K562 (cell line): ENCODE measurements at regions of chr10 and their contacts with region 1.

Region 1: DNA sequence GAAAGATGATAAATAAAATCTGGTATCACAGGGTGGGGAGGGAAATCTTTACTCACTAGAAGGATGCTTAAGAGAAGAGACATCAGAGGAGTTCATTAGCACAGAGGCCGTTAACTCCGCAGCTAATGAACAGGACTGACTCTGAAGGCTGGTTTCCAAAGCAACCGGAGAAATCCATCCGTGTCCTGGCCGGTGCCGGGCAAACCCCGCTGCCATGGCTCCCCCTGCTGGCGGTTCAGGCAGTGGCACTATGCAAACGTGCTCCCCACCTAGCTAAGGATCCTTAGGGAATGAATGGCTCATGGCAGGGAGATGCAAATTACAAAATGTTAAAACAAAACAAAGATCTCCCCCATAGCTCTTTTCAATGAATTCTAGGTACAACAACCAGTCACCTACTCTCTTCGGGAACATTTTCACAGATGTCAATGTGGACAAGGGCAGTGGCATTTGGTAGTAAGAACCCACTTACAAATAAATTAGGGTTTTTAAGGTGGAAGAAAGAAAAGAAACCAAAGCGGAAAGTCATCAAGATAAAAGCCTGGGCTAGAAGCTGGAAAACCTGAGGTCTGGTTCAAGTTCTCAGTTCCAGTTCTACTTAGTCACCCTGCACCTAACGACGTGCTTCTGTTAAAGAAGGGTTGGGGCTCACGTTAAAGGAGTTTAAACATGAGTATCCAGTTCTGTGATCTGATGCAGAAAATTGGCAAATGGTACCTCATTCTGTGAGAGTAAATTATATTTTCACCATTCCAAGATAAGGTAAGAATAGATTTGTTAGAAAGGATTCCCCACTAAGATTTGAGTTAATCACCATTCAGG is 138.2 kb downstream of the SVIL start:
- DNase-seq: peak; percentile 66 to 75 (median 72)
- ATAC-seq: peak; percentile 97
- H3K4me3 ChIP-seq: no peak overlapping the region
- H3K27ac ChIP-seq: no peak overlapping the region
- H3K4me1 ChIP-seq: no peaks in the 10 kb centered on the region
- H3K27me3 ChIP-seq: peaks cover 22 to 44% of the 10 kb centered on the region in 2 experiments
- CTCF ChIP-seq: peak; percentile 84 to 91 (median 87)
- EP300 ChIP-seq: no peak
- POLR2A ChIP-seq: no peak
- RAD21 ChIP-seq: peak; percentile 85 to 90

Region 2: DNA sequence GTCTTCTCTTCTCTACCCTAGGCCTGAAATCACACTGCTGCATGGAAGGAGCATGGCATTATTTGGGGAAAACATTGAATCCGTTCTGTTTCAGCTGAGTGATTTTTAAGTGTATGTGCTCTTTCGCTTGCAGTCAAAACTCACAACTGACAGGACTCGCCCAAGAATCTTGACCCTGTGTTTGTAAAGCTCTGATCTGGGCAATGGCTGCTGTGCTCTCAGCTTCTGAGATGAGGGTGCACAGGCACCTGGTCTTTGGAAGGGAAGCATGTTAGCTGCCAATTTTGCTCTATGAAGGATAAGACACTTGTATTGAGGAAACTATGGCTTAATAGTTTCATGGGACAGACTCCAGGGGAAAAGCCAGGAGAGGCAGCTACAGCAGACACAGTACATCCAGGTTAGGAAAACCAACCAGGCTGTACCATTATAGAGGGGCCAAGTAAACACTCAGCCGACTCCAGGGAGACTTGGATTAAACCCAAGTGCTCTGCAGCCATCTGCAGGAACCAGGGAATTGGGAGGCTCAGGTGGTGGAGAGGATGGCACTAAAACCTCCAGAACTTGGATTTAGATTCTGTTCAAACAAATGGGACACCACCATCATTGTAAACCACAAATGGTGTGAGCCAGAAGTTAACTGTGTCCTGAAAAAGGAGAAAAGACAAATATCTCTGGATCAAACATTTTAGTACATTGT is 164.3 kb before region 1 on chr10:
- CTCF ChIA-PET with region 1: no interaction called
- POLR2A ChIA-PET with region 1: no interaction called
- in situ Hi-C with region 1: no loop called
- intact Hi-C with region 1: no loop called
- DNase-seq: no peak
- ATAC-seq: no peak
- H3K4me3 ChIP-seq: no peak overlapping the region
- H3K27ac ChIP-seq: no peak overlapping the region
- H3K4me1 ChIP-seq: no peaks in the 10 kb centered on the region
- H3K27me3 ChIP-seq: peaks cover 4% of the 10 kb centered on the region in 2 experiments; a peak in 4 of 5 replicates
- CTCF ChIP-seq: no peak
- EP300 ChIP-seq: no peak
- POLR2A ChIP-seq: no peak
- RAD21 ChIP-seq: no peak

Region 3: GRCh38 chr10:29377333-29377961 is 119.1 kb before region 1 on chr10:
- CTCF ChIA-PET with region 1: interaction called, 9 read pairs
- POLR2A ChIA-PET with region 1: no interaction called
- in situ Hi-C with region 1: no loop called
- intact Hi-C with region 1: loop called (anchors 1 kb)
- DNase-seq: peak; percentile 28 to 55 (median 40)
- ATAC-seq: peak; percentile 76
- H3K4me3 ChIP-seq: no peak overlapping the region
- H3K27ac ChIP-seq: no peak overlapping the region
- H3K4me1 ChIP-seq: no peaks in the 10 kb centered on the region
- H3K27me3 ChIP-seq: peaks cover 12 to 25% of the 10 kb centered on the region in 2 experiments; a peak in 4 of 5 replicates
- CTCF ChIP-seq: peak; percentile 53 to 90 (median 61); a peak in 5 of 6 replicates
- EP300 ChIP-seq: no peak
- POLR2A ChIP-seq: no peak
- RAD21 ChIP-seq: peak; percentile 64 to 65

Region 4: GRCh38 chr10:29392376-29393021 is 104.1 kb before region 1 on chr10:
- CTCF ChIA-PET with region 1: no interaction called
- POLR2A ChIA-PET with region 1: no interaction called
- in situ Hi-C with region 1: no loop called
- intact Hi-C with region 1: no loop called
- DNase-seq: peak; percentile 52 to 59 (median 56)
- ATAC-seq: peak; percentile 84
- H3K4me3 ChIP-seq: no peak overlapping the region
- H3K27ac ChIP-seq: no peak overlapping the region
- H3K4me1 ChIP-seq: no peaks in the 10 kb centered on the region
- H3K27me3 ChIP-seq: peaks cover 20 to 43% of the 10 kb centered on the region in 2 experiments; a peak in 3 of 5 replicates
- CTCF ChIP-seq: peak; percentile 66 to 75 (median 73)
- EP300 ChIP-seq: no peak
- POLR2A ChIP-seq: no peak
- RAD21 ChIP-seq: peak; percentile 18 to 58; a peak in 3 of 4 replicates

Region 5: DNA sequence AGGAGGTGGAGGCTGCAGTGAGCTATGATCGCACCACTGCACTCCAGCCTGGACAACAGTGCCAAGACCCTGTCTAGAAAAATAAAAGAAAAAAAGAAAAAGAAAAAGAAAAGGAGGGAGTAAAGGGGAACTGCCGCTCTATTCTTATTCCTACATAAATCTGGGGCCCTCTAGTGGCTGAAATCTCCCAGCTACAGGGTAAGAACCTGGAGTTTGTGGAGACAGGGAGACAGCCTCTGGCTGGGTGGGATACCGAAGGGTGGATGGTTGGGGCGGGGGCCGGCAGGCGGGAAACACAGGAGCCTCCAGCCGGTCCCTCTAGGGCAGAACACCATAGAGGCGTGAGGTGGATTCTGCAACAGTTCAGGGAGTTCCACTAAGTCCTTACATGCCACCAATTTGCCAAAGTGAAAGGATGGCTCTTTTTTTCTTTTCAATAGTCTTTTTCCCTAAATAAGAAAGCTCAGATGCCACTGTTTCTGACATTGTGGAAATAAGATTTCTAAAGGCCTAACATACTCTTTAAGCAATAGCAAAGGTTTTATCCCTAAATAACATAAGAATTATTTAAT is 20.9 kb after region 1 on chr10:
- CTCF ChIA-PET with region 1: no interaction called
- POLR2A ChIA-PET with region 1: no interaction called
- in situ Hi-C with region 1: no loop called
- intact Hi-C with region 1: loop called (anchors 1 kb)
- DNase-seq: peak; percentile 38 to 52 (median 42)
- ATAC-seq: peak; percentile 93
- H3K4me3 ChIP-seq: no peak overlapping the region
- H3K27ac ChIP-seq: no peak overlapping the region
- H3K4me1 ChIP-seq: no peaks in the 10 kb centered on the region
- H3K27me3 ChIP-seq: peaks cover 8 to 27% of the 10 kb centered on the region in 2 experiments; a peak in 4 of 5 replicates
- CTCF ChIP-seq: peak; percentile 61 to 71 (median 64)
- EP300 ChIP-seq: no peak
- POLR2A ChIP-seq: no peak
- RAD21 ChIP-seq: peak in 1 of 2 experiments; percentile 28; a peak in 1 of 4 replicates

Region 6: DNA sequence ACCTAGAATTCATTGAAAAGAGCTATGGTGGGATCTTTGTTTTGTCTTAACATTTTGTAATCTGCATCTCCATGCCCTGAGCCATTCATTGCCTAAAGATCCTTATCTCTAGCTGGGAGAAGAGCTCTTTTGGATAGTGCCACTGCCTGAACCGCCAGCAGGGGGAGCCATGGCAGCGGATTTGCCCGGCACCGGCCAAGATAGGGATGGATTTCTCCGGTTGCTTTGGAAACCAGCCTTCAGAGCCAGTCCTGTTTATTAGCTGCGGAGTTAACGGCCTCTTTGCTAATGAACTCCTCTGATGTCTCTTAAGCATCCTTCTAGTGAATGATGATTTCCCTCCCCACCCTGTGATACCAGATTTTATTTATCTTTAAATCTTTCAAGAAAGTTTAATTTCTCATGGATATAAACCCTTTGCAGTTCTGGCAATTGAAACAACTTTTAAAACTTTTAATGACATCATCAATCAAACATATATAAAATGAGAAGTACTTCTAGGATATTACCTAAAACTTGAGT is 1191.2 kb after region 1 on chr10:
- CTCF ChIA-PET with region 1: no interaction called
- POLR2A ChIA-PET with region 1: no interaction called
- in situ Hi-C with region 1: loop called (anchors 5 kb)
- intact Hi-C with region 1: no loop called
- DNase-seq: peak; percentile 71 to 79 (median 74)
- ATAC-seq: peak; percentile 93
- H3K4me3 ChIP-seq: no peak overlapping the region
- H3K27ac ChIP-seq: no peak overlapping the region
- H3K4me1 ChIP-seq: no peaks in the 10 kb centered on the region; a peak in 1 of 5 replicates
- H3K27me3 ChIP-seq: peaks cover 20 to 47% of the 10 kb centered on the region in 2 experiments
- CTCF ChIP-seq: peak; percentile 86 to 93 (median 88)
- EP300 ChIP-seq: no peak
- POLR2A ChIP-seq: no peak
- RAD21 ChIP-seq: peak; percentile 52 to 77